ENCODE measurements at regions of chr18 and their contacts with region 1.

Region 1: DNA sequence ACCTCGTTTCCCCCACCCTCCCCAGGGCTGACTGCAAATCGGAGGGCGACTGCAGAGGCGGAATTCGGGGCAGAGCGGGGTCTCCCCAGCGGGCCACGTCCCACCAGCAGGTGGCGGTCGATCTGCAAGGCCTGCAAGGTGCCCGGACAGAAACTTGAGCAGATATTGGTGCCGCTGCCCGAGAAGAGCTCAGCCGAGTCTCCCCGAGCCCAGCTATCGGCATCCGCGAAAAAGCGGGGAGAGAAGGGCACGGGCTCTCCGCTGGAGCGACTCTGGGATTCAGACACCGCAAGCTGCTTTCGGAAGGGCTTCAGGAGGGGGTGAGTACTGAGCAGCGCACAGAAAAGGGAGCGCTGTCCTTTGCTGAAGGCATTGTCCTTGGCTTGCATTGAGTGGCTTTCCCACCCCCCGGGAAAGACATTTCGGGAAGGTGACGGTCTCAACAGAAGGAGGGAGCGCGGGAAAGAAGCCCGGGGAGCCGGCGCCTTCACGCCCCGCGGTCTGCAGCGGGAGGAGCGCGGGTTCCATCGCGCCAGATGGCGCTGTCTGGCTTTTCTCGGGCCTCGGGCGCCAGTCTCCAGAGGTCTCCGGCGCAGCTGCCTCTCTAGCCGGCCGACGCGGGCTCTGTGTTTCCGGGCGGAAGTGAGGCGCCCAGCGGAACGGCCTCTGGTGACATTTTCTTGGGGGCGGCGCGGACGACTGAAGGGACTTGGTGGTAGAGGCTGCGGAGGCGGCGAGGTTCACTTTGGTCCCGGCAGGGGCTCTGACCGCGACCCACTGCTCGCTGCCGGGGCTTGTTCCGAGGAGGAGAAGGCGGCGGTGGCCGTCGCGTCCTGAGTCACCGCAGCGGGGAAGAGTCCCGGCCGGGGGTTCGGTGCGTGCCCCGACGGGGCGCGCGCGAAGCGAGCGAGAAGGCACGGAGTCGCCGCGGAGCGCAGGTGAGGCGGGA is 69.5 kb downstream of the HAUS1 start:
- DNase-seq: peak; percentile 86 to 91
- ATAC-seq: peak; percentile 84 to 88
- H3K4me3 ChIP-seq: peak overlapping the region; percentile 96 to 100 (median 98)
- H3K27ac ChIP-seq: peak overlapping the region; percentile 95 to 100 (median 98)
- H3K4me1 ChIP-seq: peaks cover 27 to 35% of the 10 kb centered on the region in 2 donors
- H3K27me3 ChIP-seq: no peaks in the 10 kb centered on the region
- CTCF ChIP-seq: peak; percentile 81 to 91 (median 89)
- POLR2A ChIP-seq: peak; percentile 71 to 87

Region 2: GRCh38 chr18:46019941-46020340 is 153.7 kb before region 1 on chr18:
- in situ Hi-C with region 1: no loop called
- intact Hi-C with region 1: no loop called
- DNase-seq: no peak
- ATAC-seq: no peak
- H3K4me3 ChIP-seq: no peak overlapping the region
- H3K27ac ChIP-seq: no peak overlapping the region
- H3K4me1 ChIP-seq: no peaks in the 10 kb centered on the region
- H3K27me3 ChIP-seq: no peaks in the 10 kb centered on the region
- CTCF ChIP-seq: no peak
- POLR2A ChIP-seq: no peak

Region 3: DNA sequence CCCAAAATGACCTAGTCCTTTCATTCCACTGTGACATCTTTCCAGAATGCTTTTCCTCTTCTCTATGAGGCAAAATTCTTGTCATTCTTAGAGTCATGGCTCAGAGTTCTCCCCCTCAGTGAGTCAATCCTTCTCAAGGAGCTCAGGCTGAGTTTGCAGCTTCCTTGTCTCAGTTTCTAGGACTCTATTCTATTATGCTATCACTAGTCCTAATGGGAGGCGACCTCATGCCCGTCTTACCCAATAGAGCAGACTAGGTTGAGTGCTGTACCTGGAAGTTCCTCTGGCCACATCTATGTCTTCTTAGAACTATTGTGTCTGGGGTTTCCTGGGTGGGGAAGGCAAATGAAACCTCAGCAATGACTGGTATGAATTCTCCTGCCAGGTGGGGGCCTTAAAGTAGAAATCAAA is 18.0 kb before region 1 on chr18:
- in situ Hi-C with region 1: no loop called
- intact Hi-C with region 1: loop called (anchors 1 kb)
- DNase-seq: no peak
- ATAC-seq: no peak
- H3K4me3 ChIP-seq: no peak overlapping the region
- H3K27ac ChIP-seq: peak overlapping the region in 1 of 4 donors; percentile 97
- H3K4me1 ChIP-seq: peaks cover 26 to 27% of the 10 kb centered on the region in 2 donors
- H3K27me3 ChIP-seq: no peaks in the 10 kb centered on the region
- CTCF ChIP-seq: no peak
- POLR2A ChIP-seq: no peak

Region 4: GRCh38 chr18:46213295-46213694 is 39.6 kb after region 1 on chr18:
- in situ Hi-C with region 1: no loop called
- intact Hi-C with region 1: loop called (anchors 2 kb)
- DNase-seq: no peak
- ATAC-seq: peak; percentile 28 to 59
- H3K4me3 ChIP-seq: no peak overlapping the region
- H3K27ac ChIP-seq: peak overlapping the region in 2 of 4 donors; percentile 28 to 46
- H3K4me1 ChIP-seq: peaks cover 22 to 26% of the 10 kb centered on the region in 2 donors
- H3K27me3 ChIP-seq: no peaks in the 10 kb centered on the region
- CTCF ChIP-seq: peak; percentile 29 to 59 (median 42)
- POLR2A ChIP-seq: no peak

Region 5: DNA sequence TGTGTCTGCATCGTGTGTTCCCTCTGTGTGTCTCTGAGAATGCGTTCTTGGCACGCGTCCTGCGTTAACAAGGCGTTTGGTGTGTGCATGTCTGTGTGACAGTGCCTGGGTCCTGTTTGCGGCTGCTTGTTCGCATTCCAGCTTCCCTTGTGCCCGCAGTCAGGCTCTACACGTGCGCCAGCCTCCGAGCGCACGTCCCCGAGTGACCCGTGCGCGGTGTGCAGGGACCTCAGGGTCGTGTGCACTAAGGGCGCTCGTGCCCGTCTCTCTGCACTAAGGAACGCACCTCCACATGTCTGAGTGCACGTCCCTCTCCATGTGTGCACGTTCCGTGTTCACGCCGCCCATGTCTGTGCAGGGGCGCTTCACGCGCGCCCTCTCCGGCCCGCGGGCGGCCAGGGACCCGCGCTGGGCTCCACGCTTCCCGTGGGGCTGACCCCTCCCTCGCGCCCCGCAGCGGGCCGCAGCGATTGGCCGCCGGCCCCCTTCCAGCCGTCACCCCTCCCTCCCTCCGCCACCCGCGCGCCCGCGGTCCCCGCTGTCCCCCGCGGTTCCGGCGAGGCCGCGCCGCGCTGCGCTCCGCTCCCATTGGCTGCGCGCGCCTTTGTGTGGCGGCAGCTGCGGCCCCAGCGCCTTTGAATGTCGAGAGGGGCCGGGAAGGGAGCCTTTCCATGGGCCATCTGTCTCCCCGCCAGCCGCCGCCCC is 159.9 kb after region 1 on chr18:
- in situ Hi-C with region 1: no loop called
- intact Hi-C with region 1: loop called (anchors 5 kb)
- DNase-seq: no peak
- ATAC-seq: peak; percentile 47 to 49
- H3K4me3 ChIP-seq: peak overlapping the region; percentile 50 to 55 (median 54)
- H3K27ac ChIP-seq: no peak overlapping the region
- H3K4me1 ChIP-seq: peaks cover 0 to 4% of the 10 kb centered on the region in 2 donors
- H3K27me3 ChIP-seq: no peaks in the 10 kb centered on the region
- CTCF ChIP-seq: no peak
- POLR2A ChIP-seq: no peak

Region 6: DNA sequence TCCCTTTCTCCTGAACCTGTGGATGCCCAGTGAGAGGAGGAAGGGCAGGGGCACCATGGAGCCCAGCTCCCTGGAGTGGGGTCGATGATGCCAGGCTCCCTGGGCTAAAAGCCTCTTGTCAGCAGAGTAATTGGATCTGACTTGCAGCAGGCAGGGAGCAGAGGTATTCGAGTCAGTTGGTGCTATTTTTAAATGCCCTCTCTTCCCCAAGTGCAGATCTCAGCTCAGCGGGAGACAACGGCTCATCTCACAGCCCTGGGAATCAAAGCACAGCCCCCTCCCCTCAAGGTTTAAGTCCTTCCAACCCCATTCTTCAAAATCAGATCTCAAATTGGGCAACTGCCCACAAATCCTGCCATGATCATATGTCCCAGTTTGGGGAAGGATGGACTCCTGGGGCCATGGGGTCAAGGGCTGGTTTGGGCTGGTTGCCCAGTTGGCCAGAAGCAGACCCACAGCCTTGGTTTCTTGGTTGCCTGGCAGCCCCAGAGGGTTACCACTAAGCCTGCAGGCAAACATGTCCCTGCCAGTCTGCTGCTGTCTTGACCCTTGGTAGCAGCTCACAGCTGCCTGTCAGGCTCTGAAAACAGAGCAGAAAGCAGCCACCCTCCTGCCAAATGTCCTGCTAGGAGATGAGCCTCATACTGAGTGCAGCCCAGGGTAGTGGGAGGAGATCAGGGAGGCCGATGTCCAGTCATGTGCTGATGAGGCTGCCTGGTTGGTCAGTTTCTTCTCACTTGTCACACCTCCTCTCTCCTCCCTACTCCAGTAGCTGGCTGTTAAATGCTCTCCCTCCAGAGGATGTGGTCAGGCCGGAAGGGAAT is 238.4 kb after region 1 on chr18:
- in situ Hi-C with region 1: no loop called
- intact Hi-C with region 1: loop called (anchors 2 kb)
- DNase-seq: peak; percentile 74 to 94
- ATAC-seq: peak; percentile 82 to 84
- H3K4me3 ChIP-seq: peak overlapping the region in 1 of 4 donors; percentile 23
- H3K27ac ChIP-seq: peak overlapping the region; percentile 91 to 98 (median 96)
- H3K4me1 ChIP-seq: peaks cover 76 to 78% of the 10 kb centered on the region in 2 donors
- H3K27me3 ChIP-seq: no peaks in the 10 kb centered on the region
- CTCF ChIP-seq: no peak
- POLR2A ChIP-seq: peak in 1 of 2 donors; percentile 72

Region 7: DNA sequence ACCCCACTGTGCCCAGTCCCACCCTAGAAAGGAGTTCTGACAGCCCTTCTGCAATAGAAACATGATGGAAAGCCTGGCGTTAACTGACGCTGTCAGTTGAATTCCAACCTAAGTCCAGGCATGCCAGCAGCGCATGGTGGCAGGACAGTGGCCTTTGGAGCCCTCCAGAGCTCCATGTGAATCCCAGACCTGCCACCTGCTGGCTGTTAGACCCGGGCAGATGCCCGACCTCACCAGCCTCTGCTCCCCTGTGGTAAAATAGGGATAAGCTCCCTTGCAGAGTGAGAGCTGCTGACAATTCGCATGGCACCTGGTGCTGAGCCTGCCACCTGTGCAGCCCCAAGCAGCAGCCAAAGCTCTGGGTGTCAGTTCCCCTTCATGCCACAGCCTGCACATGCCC is 344.8 kb after region 1 on chr18:
- in situ Hi-C with region 1: loop called in 1 of 4 experiments (anchors 25 kb)
- intact Hi-C with region 1: no loop called
- DNase-seq: peak; percentile 12 to 54
- ATAC-seq: peak; percentile 83
- H3K4me3 ChIP-seq: no peak overlapping the region
- H3K27ac ChIP-seq: no peak overlapping the region
- H3K4me1 ChIP-seq: no peaks in the 10 kb centered on the region
- H3K27me3 ChIP-seq: no peaks in the 10 kb centered on the region
- CTCF ChIP-seq: peak; percentile 27 to 63 (median 51)
- POLR2A ChIP-seq: no peak

Region 8: GRCh38 chr18:46660955-46661749 is 487.5 kb after region 1 on chr18:
- in situ Hi-C with region 1: loop called in 1 of 4 experiments (anchors 5 kb)
- intact Hi-C with region 1: loop called (anchors 1 kb)
- DNase-seq: peak in 1 of 2 donors; percentile 28
- ATAC-seq: peak; percentile 57 to 67
- H3K4me3 ChIP-seq: no peak overlapping the region
- H3K27ac ChIP-seq: peak overlapping the region in 1 of 4 donors; percentile 8
- H3K4me1 ChIP-seq: peaks cover 0 to 4% of the 10 kb centered on the region in 2 donors
- H3K27me3 ChIP-seq: no peaks in the 10 kb centered on the region
- CTCF ChIP-seq: no peak
- POLR2A ChIP-seq: no peak

Measured in gastrocnemius medialis (tissue), 4 donors.